Heart left ventricle (tissue), 16 donors: ENCODE measurements at regions of chr18 and their contacts with region 1.

Region 1: DNA sequence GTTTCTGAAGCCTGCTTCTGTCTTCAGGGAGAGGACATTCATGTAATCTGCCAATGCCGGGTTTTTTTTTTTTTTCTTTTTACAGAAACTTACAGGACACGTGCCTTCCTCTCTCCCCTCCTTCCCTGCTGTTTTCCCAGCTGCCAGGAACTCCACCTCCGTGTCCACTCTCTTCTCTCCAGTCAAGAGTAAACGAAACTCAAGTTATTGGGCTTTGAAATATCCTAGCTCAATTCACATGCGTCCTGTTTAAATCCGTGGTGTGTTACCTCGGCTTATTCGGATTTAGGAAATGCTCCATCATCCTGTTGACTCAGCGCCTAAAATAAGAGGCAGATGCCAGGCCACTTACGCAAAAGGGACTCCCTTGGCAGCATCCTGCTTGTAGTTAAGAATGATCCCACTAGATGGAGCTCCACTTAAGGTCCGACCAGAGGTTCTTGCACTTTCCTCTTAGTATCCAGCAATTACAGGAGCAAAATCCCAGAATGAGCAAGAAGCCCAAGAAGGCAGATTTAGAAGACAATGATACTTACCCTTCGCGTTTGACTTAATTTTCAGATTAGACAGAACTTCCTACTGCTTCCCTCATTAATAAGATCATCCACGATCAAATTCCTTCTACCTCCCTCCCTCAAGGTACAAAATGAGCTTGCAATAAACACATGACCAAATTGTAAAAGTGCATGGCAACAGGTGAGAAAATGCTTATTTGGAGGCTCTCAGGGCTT is 97.2 kb upstream of the ZCCHC2 start:
- DNase-seq: peak in 4 of 5 donors; percentile 77 to 89 (median 86)
- ATAC-seq: peak; percentile 91 to 95 (median 92)
- H3K4me3 ChIP-seq: peak overlapping the region in 10 of 12 donors; percentile 20 to 54 (median 41)
- H3K27ac ChIP-seq: peak overlapping the region; percentile 25 to 93 (median 85)
- H3K4me1 ChIP-seq: peaks cover 0 to 32% (median 10%) of the 10 kb centered on the region in 12 donors
- H3K27me3 ChIP-seq: no peaks in the 10 kb centered on the region
- CTCF ChIP-seq: peak; percentile 72 to 92 (median 84)
- POLR2A ChIP-seq: no peak

Region 2: GRCh38 chr18:62186774-62187542 is 238.7 kb before region 1 on chr18 and contains the starts of genes PIGN and RELCH:
- intact Hi-C with region 1: loop called in 1 of 10 experiments (anchors 2 kb)
- DNase-seq: peak; percentile 93 to 97 (median 96)
- ATAC-seq: peak; percentile 99 to 100 (median 99)
- H3K4me3 ChIP-seq: peak within 1 kb of the TSS; percentile 66 to 100 (median 90)
- H3K27ac ChIP-seq: peak within 1 kb of the TSS; percentile 37 to 87 (median 81)
- H3K4me1 ChIP-seq: peaks cover 0 to 51% (median 35%) of the 10 kb centered on the region in 12 donors
- H3K27me3 ChIP-seq: no peaks in the 10 kb centered on the region
- CTCF ChIP-seq: no peak
- POLR2A ChIP-seq: peak in 1 of 2 donors; percentile 74
- total RNA-seq, gene PIGN: 16.6 to 29.6 (median 23.3) TPM
- total RNA-seq, gene RELCH: 11.6 to 24.8 (median 15.2) TPM

Region 3: DNA sequence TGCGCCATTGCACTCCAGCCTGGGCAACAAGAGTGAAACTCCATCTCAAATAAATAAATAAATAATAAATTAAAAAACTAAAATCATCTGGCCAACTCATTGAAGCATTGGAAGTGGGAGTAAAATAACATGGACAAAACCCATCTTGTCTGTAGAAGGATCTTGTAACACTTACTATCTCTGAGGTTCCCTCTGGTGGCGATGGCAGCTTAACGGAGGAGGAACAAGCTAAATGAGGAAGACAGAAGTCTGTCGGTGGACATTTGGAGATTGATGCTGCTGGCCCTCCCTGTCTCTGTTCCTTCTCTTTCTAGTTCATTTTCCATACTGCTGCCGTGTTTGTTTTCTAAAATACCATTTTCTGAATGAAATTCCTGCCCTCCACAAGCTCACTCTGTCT is 140.6 kb after region 1 on chr18:
- intact Hi-C with region 1: loop called in 3 of 10 experiments (anchors 5 kb)
- DNase-seq: peak in 3 of 5 donors; percentile 40 to 66 (median 42)
- ATAC-seq: peak in 2 of 4 donors; percentile 53 to 68
- H3K4me3 ChIP-seq: no peak overlapping the region
- H3K27ac ChIP-seq: no peak overlapping the region
- H3K4me1 ChIP-seq: no peaks in the 10 kb centered on the region
- H3K27me3 ChIP-seq: no peaks in the 10 kb centered on the region
- CTCF ChIP-seq: peak in 11 of 12 donors; percentile 12 to 48 (median 40)
- POLR2A ChIP-seq: no peak

Region 4: DNA sequence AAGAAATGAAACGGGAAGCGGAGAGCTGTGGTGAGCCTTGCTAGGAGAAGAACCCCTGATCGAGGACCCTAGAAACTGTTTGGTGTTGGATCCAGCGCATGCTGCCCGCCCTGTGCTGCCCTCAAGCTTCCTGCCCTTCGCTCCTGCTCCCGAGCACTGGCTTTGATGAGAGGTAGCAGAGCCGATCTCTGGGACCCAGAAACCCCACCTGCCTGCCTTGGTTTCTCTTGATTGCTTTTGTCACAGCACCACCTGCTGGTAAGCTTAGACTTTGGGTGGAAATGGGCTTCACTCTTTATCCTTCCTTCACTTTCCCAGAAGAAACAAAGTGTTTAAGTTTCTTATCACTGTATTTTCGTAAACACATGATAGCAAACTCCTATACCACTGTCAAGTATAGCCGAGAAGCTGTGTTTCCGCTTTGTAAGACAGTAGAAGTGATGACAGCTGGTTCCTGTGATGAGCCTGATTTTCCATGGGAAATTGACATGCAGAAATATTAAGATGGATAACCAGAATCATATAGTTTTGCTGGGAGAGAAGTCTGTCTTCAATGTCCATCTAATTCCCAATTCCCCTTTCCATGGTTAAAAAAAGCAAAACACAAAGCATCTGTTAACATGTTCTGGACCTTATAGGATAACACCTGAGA is 557.1 kb after region 1 on chr18:
- intact Hi-C with region 1: loop called in 2 of 10 experiments (anchors 2 to 5 kb)
- DNase-seq: peak in 3 of 5 donors; percentile 45 to 60 (median 56)
- ATAC-seq: peak; percentile 32 to 82 (median 66)
- H3K4me3 ChIP-seq: peak overlapping the region in 9 of 12 donors; percentile 21 to 57 (median 44)
- H3K27ac ChIP-seq: no peak overlapping the region
- H3K4me1 ChIP-seq: peaks cover 0 to 11% (median 3%) of the 10 kb centered on the region in 12 donors
- H3K27me3 ChIP-seq: no peaks in the 10 kb centered on the region
- CTCF ChIP-seq: peak; percentile 64 to 87 (median 78)
- POLR2A ChIP-seq: no peak